SK-N-SH (cell line): ENCODE measurements at regions of chr4 and their contacts with region 1.

Region 1: GRCh38 chr4:147866532-147867271 is 134.8 kb downstream of the ARHGAP10 start:
- DNase-seq: peak; percentile 72
- H3K4me3 ChIP-seq: peak overlapping the region in 1 of 2 experiments; percentile 48; a peak in 1 of 4 replicates
- H3K27ac ChIP-seq: peak overlapping the region in 1 of 2 experiments; percentile 58; a peak in 1 of 4 replicates
- H3K4me1 ChIP-seq: peaks cover 12 to 30% of the 10 kb centered on the region in 2 experiments; a peak in 2 of 4 replicates
- H3K27me3 ChIP-seq: no peaks in the 10 kb centered on the region
- CTCF ChIP-seq: peak; percentile 100
- EP300 ChIP-seq: no peak
- RAD21 ChIP-seq: peak; percentile 100

Region 2: DNA sequence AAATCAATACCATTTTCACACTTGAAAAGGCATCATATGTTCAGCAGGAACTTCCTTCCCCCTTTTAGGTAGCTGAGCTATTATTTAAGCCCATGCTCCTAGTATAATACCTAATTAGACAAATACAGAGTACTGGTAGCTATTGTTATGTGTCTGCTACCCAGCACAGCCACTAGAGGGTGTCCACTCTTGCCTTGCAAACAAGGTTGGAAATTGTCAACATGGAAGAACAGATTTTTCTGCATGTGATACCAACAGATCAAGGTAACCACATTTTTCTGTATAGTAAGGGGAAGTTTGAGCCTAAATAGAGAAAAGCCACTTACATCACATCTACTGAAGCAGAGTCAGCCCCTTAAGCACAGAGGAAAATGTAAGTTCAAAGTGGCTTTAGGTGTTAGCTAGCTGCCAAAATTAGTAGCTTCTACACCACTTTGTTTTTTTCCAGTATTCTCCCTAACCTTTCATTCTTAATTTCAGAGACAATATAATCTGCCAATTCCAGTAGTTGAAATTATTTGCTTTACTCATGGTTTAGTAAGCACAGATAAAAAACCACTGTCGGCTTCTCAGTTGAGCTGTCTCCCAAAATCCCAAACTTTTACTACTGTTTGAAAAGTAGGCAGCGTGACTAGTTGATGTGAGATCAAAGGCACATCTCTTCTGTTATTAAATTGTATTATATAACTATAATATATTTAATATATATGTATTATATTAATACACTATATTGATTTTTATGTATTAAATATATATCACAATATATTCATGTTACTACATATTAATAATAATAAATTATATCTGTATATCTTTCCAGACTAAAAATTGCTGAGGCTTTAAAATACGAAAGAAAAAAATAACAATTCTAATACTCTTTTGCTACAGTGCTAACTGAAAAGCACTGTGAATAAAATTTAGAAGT is 347.6 kb before region 1 on chr4:
- CTCF ChIA-PET with region 1: interaction called, 14 read pairs
- POLR2A ChIA-PET with region 1: no interaction called
- DNase-seq: peak; percentile 44
- H3K4me3 ChIP-seq: no peak overlapping the region; a peak in 1 of 4 replicates
- H3K27ac ChIP-seq: peak overlapping the region in 1 of 2 experiments; percentile 57; a peak in 1 of 4 replicates
- H3K4me1 ChIP-seq: peaks cover 3 to 10% of the 10 kb centered on the region in 2 experiments; a peak in 2 of 4 replicates
- H3K27me3 ChIP-seq: no peaks in the 10 kb centered on the region
- CTCF ChIP-seq: peak; percentile 93
- EP300 ChIP-seq: no peak
- RAD21 ChIP-seq: peak; percentile 83

Region 3: GRCh38 chr4:147629783-147630730 is 236.6 kb before region 1 on chr4:
- CTCF ChIA-PET with region 1: interaction called, 18 read pairs
- POLR2A ChIA-PET with region 1: no interaction called
- DNase-seq: no peak
- H3K4me3 ChIP-seq: no peak overlapping the region
- H3K27ac ChIP-seq: peak overlapping the region in 1 of 2 experiments; percentile 11; a peak in 1 of 4 replicates
- H3K4me1 ChIP-seq: peaks cover 0 to 7% of the 10 kb centered on the region in 2 experiments; a peak in 2 of 4 replicates
- H3K27me3 ChIP-seq: no peaks in the 10 kb centered on the region
- CTCF ChIP-seq: no peak
- EP300 ChIP-seq: no peak
- RAD21 ChIP-seq: no peak

Region 4: GRCh38 chr4:147689067-147689466 is 177.6 kb before region 1 on chr4:
- CTCF ChIA-PET with region 1: interaction called, 40 read pairs
- POLR2A ChIA-PET with region 1: interaction called, 6 read pairs
- DNase-seq: no peak
- H3K4me3 ChIP-seq: no peak overlapping the region
- H3K27ac ChIP-seq: no peak overlapping the region
- H3K4me1 ChIP-seq: peaks cover 0 to 2% of the 10 kb centered on the region in 2 experiments; a peak in 1 of 4 replicates
- H3K27me3 ChIP-seq: no peaks in the 10 kb centered on the region
- CTCF ChIP-seq: no peak
- EP300 ChIP-seq: no peak
- RAD21 ChIP-seq: no peak

Region 5: GRCh38 chr4:147749811-147750321 is 116.8 kb before region 1 on chr4:
- CTCF ChIA-PET with region 1: interaction called, 17 read pairs
- POLR2A ChIA-PET with region 1: no interaction called
- DNase-seq: no peak
- H3K4me3 ChIP-seq: no peak overlapping the region
- H3K27ac ChIP-seq: no peak overlapping the region
- H3K4me1 ChIP-seq: no peaks in the 10 kb centered on the region; a peak in 2 of 4 replicates
- H3K27me3 ChIP-seq: no peaks in the 10 kb centered on the region
- CTCF ChIP-seq: no peak
- EP300 ChIP-seq: no peak
- RAD21 ChIP-seq: no peak

Region 6: DNA sequence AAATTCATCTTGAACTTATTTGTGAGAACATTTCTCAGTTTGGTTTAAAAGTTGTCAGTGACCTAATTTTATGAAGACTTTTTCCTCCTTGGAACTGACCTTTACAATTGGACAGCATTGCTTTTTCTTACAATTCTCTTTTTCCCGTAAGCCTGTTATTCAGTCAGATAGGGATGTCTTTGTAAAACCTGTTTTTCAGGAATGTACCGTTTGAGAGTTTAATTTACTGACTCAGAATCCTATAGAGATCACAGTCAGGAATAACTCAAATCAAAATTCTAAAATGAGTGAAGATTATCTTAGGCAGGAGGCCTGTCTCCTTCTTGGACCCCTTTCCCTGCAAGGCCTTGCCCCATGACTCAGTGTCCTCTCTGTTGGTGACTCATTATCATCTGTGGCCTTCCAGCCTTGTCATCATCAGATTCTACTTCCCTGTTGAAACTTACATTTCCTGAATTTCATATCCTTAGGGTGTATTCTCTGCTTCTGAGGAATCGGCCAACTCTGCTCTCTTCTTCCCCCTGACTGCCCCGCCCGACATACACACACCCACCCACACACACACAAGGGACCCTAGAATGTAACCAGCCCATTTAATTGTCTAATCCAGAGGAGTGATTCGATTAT is 35.0 kb before region 1 on chr4:
- CTCF ChIA-PET with region 1: interaction called, 10 read pairs
- POLR2A ChIA-PET with region 1: no interaction called
- DNase-seq: no peak
- H3K4me3 ChIP-seq: no peak overlapping the region; a peak in 1 of 4 replicates
- H3K27ac ChIP-seq: peak overlapping the region; percentile 58 to 92
- H3K4me1 ChIP-seq: peaks cover 18 to 28% of the 10 kb centered on the region in 2 experiments
- H3K27me3 ChIP-seq: no peaks in the 10 kb centered on the region
- CTCF ChIP-seq: no peak
- EP300 ChIP-seq: peak in 1 of 2 experiments; percentile 62; a peak in 1 of 4 replicates
- RAD21 ChIP-seq: no peak